Heart left ventricle (tissue), 16 donors: ENCODE measurements at regions of chrX and their contacts with region 1.

Region 1: GRCh38 chrX:82081027-82081426 is 879.1 kb downstream of the SH3BGRL start:
- DNase-seq: no peak
- ATAC-seq: no peak
- H3K4me3 ChIP-seq: no peak overlapping the region
- H3K27ac ChIP-seq: no peak overlapping the region
- H3K4me1 ChIP-seq: no peaks in the 10 kb centered on the region
- H3K27me3 ChIP-seq: no peaks in the 10 kb centered on the region
- CTCF ChIP-seq: peak in 1 of 12 donors; percentile 14
- POLR2A ChIP-seq: no peak

Region 2: GRCh38 chrX:82115728-82116127 is 34.7 kb after region 1 on chrX:
- intact Hi-C with region 1: no loop called
- DNase-seq: no peak
- ATAC-seq: no peak
- H3K4me3 ChIP-seq: no peak overlapping the region
- H3K27ac ChIP-seq: no peak overlapping the region
- H3K4me1 ChIP-seq: no peaks in the 10 kb centered on the region
- H3K27me3 ChIP-seq: no peaks in the 10 kb centered on the region
- CTCF ChIP-seq: no peak
- POLR2A ChIP-seq: no peak

Region 3: GRCh38 chrX:82127228-82128123 is 46.4 kb after region 1 on chrX:
- intact Hi-C with region 1: loop called in 1 of 10 experiments (anchors 2 kb)
- DNase-seq: no peak
- ATAC-seq: no peak
- H3K4me3 ChIP-seq: no peak overlapping the region
- H3K27ac ChIP-seq: no peak overlapping the region
- H3K4me1 ChIP-seq: no peaks in the 10 kb centered on the region
- H3K27me3 ChIP-seq: no peaks in the 10 kb centered on the region
- CTCF ChIP-seq: no peak
- POLR2A ChIP-seq: no peak